ENCODE measurements at regions of chr7 and their contacts with region 1.

Region 1: GRCh38 chr7:128904381-128905197 is 5.9 kb downstream of the KCP start:
- DNase-seq: peak; percentile 76
- H3K4me3 ChIP-seq: no peak overlapping the region
- H3K27ac ChIP-seq: no peak overlapping the region
- H3K4me1 ChIP-seq: no peaks in the 10 kb centered on the region
- H3K27me3 ChIP-seq: peaks cover 15% of the 10 kb centered on the region

Region 2: GRCh38 chr7:129091484-129092002 is 187.0 kb after region 1 on chr7:
- in situ Hi-C with region 1: loop called (anchors 10 kb)
- DNase-seq: peak; percentile 69
- H3K4me3 ChIP-seq: no peak overlapping the region
- H3K27ac ChIP-seq: no peak overlapping the region
- H3K4me1 ChIP-seq: no peaks in the 10 kb centered on the region
- H3K27me3 ChIP-seq: peaks cover 19% of the 10 kb centered on the region

Region 3: DNA sequence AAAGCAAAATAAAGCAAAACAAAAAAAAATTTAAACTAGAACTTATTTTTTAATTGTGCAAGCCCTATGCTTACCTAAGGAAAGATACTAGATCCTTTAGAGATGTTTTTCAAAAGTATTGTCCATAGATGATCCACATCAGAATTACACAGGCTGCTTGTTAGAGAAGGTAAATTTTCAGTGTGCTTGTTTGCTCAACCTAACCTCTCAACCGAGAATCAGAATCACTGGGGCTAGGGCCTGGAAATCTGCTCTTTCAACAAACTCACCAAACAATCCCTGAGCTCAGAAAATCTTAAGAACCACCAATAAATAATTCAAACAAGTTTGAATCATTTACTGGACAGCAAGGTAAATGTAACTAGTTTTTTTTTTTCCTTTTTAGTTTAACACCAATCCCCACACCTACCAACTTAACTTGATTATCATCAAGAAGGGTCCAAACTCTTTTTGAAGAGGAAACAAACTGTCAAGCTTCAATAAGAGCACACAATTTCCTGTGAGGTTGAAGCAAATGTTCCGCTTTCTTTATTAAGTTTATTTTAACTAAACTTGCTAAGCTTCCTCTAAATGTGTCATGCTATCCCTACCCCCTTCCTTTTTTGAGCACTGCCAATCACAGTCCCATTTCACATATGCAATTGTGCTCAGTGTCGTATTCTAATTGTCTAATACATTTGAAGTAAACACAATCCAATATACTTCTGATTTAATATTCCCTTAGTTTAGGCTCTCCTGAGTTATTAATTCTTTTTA is 232.5 kb after region 1 on chr7:
- in situ Hi-C with region 1: no loop called
- DNase-seq: no peak
- H3K4me3 ChIP-seq: no peak overlapping the region
- H3K27ac ChIP-seq: no peak overlapping the region
- H3K4me1 ChIP-seq: no peaks in the 10 kb centered on the region
- H3K27me3 ChIP-seq: peaks cover 40% of the 10 kb centered on the region